Colonic mucosa (tissue), 4 donors: ENCODE measurements at regions of chr11 and their contacts with region 1.

Region 1: GRCh38 chr11:46392421-46393230 is 1.1 kb upstream of the CHRM4 start:
- DNase-seq: peak; percentile 85
- H3K4me3 ChIP-seq: peak overlapping the region; percentile 40
- H3K27ac ChIP-seq: no peak overlapping the region
- H3K4me1 ChIP-seq: peaks cover 16% of the 10 kb centered on the region
- H3K27me3 ChIP-seq: peaks cover 51% of the 10 kb centered on the region
- CTCF ChIP-seq: no peak

Region 2: DNA sequence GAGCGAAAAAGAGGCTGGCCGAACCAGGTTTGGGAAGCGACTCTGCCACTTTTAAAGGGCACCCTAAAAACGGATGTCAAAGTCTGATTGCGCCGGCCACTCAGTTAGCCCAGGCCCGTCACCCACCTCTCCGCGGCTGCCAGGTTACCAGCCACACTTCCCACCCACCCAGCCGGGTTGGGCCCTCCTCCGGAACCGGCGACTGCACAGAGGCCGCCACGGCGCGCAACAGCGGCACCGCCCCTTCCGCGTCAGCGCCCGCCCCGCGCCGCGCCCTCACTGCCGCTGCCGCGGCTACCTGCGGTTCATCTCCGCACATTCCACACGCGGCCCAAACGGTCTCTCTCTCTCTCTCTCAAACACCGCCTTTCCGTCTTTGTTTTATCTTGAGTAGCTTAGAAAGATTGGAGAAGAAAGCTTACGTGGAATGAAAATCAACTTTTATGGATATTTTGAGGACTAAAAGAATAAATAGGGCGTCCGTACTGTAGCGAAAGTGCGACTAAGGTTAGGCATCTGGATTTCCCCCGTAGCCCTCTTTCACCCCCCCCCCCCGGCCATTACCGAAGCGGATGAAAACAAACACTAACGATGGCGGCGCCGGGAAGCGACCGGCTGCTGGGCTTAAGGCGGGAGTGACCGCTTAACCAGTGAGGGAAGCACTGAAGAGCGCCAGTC is 224.5 kb after region 1 on chr11 and contains the starts of genes ATG13 and HARBI1:
- intact Hi-C with region 1: loop called (anchors 5 kb)
- DNase-seq: peak; percentile 91
- H3K4me3 ChIP-seq: peak within 1 kb of the TSS; percentile 93
- H3K27ac ChIP-seq: peak within 1 kb of the TSS; percentile 94
- H3K4me1 ChIP-seq: peaks cover 10% of the 10 kb centered on the region
- H3K27me3 ChIP-seq: no peaks in the 10 kb centered on the region
- CTCF ChIP-seq: no peak
- total RNA-seq, gene ATG13: 58.3 to 61.3 TPM
- total RNA-seq, gene HARBI1: 4.5 to 5.0 TPM